ENCODE measurements at regions of chr10 and their contacts with region 1.

Region 1: GRCh38 chr10:45672181-45673073 is at the start of gene ZFAND4:
- DNase-seq: peak; percentile 98
- H3K4me3 ChIP-seq: peak within 1 kb of the TSS; percentile 43 to 75 (median 58)
- H3K27ac ChIP-seq: peak within 1 kb of the TSS; percentile 88 to 93 (median 89)
- H3K4me1 ChIP-seq: peaks cover 0 to 16% (median 3%) of the 10 kb centered on the region in 4 donors
- H3K27me3 ChIP-seq: no peaks in the 10 kb centered on the region
- CTCF ChIP-seq: peak; percentile 44 to 84 (median 52)
- EP300 ChIP-seq: no peak
- POLR2A ChIP-seq: peak; percentile 45
- total RNA-seq, gene ZFAND4: 9.0 to 34.4 (median 21.4) TPM

Region 2: DNA sequence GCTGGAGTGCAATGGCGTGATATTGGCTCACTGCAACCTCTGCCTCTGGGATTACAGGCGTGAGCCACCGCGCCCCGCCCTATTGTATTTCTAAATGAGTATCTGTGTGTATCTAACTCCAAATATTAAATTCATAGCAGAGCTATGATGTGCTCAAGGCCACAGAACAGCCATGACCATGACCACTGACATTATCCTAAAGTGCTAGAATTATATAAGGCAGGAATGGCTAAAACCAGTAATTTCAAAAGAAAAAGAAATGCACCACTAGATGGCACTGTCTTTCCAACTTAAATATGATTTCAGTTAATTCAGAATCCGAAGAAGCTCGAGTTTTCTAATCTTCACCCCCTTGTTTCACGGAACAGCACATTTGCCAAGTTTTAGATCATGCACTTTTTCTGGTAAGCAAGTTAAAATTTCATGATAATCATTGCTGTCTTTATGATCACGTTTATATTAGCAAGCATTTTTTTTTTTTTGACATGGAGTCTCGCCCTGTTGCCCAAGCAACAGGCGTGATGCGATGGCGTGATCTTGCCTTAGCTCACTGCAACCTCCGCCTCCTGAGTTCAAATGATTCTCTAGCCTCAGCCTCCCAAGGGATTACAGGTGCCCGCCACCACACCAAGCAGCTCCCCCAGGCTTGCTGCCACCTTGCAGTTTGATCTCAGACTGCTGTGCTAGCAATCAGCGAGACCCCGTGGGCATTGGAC is 422.3 kb before region 1 on chr10:
- in situ Hi-C with region 1: loop called in 1 of 4 experiments (anchors 25 kb)
- intact Hi-C with region 1: no loop called
- DNase-seq: no peak
- H3K4me3 ChIP-seq: peak overlapping the region in 1 of 4 donors; percentile 26
- H3K27ac ChIP-seq: no peak overlapping the region
- H3K4me1 ChIP-seq: peaks cover 0 to 3% (median 0%) of the 10 kb centered on the region in 4 donors
- H3K27me3 ChIP-seq: no peaks in the 10 kb centered on the region
- CTCF ChIP-seq: peak; percentile 55 to 68 (median 64)
- EP300 ChIP-seq: no peak
- POLR2A ChIP-seq: no peak

Region 3: DNA sequence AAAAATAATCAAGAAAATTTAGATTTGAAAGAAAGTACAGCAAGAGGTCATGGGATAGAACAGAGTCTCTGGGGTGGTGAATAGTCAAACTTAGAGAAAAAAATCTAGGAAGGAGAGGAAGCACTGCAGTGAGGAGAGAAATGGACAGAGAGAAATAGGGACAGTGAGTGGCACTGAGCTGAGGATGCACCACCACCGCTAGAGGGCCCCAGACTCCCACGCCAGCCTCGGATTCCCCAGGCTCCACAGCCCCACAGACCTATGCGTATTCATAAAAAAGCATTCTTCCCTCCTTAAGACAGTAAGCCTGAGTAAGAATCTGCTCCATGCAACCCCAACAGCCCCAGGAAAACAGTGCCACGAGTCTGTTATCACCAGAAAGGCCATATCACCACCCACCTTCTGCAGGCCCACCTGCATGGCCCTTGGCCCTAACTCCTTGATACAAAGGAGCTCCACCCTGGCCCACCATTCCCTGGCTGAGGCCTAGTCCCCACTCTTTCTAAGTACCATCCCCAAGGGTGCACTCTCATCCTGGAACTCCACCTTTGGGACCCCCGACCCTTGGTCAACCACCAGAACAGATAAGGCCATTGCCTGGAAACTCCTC is 207.4 kb before region 1 on chr10:
- in situ Hi-C with region 1: loop called in 3 of 4 experiments (anchors 10 to 25 kb)
- intact Hi-C with region 1: no loop called
- DNase-seq: peak; percentile 86
- H3K4me3 ChIP-seq: no peak overlapping the region
- H3K27ac ChIP-seq: peak overlapping the region in 1 of 4 donors; percentile 19
- H3K4me1 ChIP-seq: peaks cover 0 to 10% (median 4%) of the 10 kb centered on the region in 4 donors
- H3K27me3 ChIP-seq: no peaks in the 10 kb centered on the region
- CTCF ChIP-seq: peak; percentile 86 to 93 (median 87)
- EP300 ChIP-seq: no peak
- POLR2A ChIP-seq: no peak

Measured in transverse colon (tissue), 4 donors.